A673 (cell line): ENCODE measurements at regions of chr1 and their contacts with region 1.

Region 1: GRCh38 chr1:160193091-160193819 is 2.9 kb downstream of the CASQ1 start:
- DNase-seq: peak; percentile 85
- H3K4me3 ChIP-seq: no peak overlapping the region
- H3K27ac ChIP-seq: no peak overlapping the region
- H3K4me1 ChIP-seq: no peaks in the 10 kb centered on the region
- H3K27me3 ChIP-seq: no peaks in the 10 kb centered on the region
- CTCF ChIP-seq: peak; percentile 96

Region 2: GRCh38 chr1:159913451-159914192 is 279.6 kb before region 1 on chr1:
- CTCF ChIA-PET with region 1: no interaction called
- POLR2A ChIA-PET with region 1: no interaction called
- intact Hi-C with region 1: no loop called
- DNase-seq: peak; percentile 38
- H3K4me3 ChIP-seq: no peak overlapping the region
- H3K27ac ChIP-seq: no peak overlapping the region
- H3K4me1 ChIP-seq: peaks cover 15% of the 10 kb centered on the region
- H3K27me3 ChIP-seq: no peaks in the 10 kb centered on the region
- CTCF ChIP-seq: no peak

Region 3: GRCh38 chr1:160130491-160130890 is 62.8 kb before region 1 on chr1:
- CTCF ChIA-PET with region 1: interaction called, 10 read pairs
- POLR2A ChIA-PET with region 1: no interaction called
- intact Hi-C with region 1: no loop called
- DNase-seq: no peak
- H3K4me3 ChIP-seq: no peak overlapping the region
- H3K27ac ChIP-seq: no peak overlapping the region
- H3K4me1 ChIP-seq: no peaks in the 10 kb centered on the region
- H3K27me3 ChIP-seq: no peaks in the 10 kb centered on the region
- CTCF ChIP-seq: no peak

Region 4: GRCh38 chr1:160251687-160252526 is 58.7 kb after region 1 on chr1:
- CTCF ChIA-PET with region 1: interaction called, 7 read pairs
- POLR2A ChIA-PET with region 1: no interaction called
- intact Hi-C with region 1: loop called (anchors 5 kb)
- DNase-seq: peak; percentile 82
- H3K4me3 ChIP-seq: no peak overlapping the region
- H3K27ac ChIP-seq: no peak overlapping the region
- H3K4me1 ChIP-seq: peaks cover 7% of the 10 kb centered on the region
- H3K27me3 ChIP-seq: no peaks in the 10 kb centered on the region
- CTCF ChIP-seq: peak; percentile 84

Region 5: GRCh38 chr1:160291248-160292220 is 98.3 kb after region 1 on chr1:
- CTCF ChIA-PET with region 1: interaction called, 5 read pairs
- POLR2A ChIA-PET with region 1: no interaction called
- intact Hi-C with region 1: loop called (anchors 1 kb)
- DNase-seq: peak; percentile 75
- H3K4me3 ChIP-seq: no peak overlapping the region
- H3K27ac ChIP-seq: no peak overlapping the region
- H3K4me1 ChIP-seq: no peaks in the 10 kb centered on the region
- H3K27me3 ChIP-seq: no peaks in the 10 kb centered on the region
- CTCF ChIP-seq: peak; percentile 88

Region 6: GRCh38 chr1:160376525-160377131 is 183.4 kb after region 1 on chr1:
- CTCF ChIA-PET with region 1: interaction called, 4 read pairs
- POLR2A ChIA-PET with region 1: no interaction called
- intact Hi-C with region 1: loop called (anchors 1 kb)
- DNase-seq: peak; percentile 84
- H3K4me3 ChIP-seq: no peak overlapping the region
- H3K27ac ChIP-seq: no peak overlapping the region
- H3K4me1 ChIP-seq: peaks cover 20% of the 10 kb centered on the region
- H3K27me3 ChIP-seq: no peaks in the 10 kb centered on the region
- CTCF ChIP-seq: peak; percentile 92